ENCODE measurements at regions of chr10 and their contacts with region 1.

Region 1: GRCh38 chr10:110162741-110163145 is 44.7 kb upstream of the MXI1 start:
- DNase-seq: no peak
- H3K4me3 ChIP-seq: no peak overlapping the region
- H3K27ac ChIP-seq: no peak overlapping the region
- H3K4me1 ChIP-seq: no peaks in the 10 kb centered on the region
- H3K27me3 ChIP-seq: no peaks in the 10 kb centered on the region
- CTCF ChIP-seq: no peak

Region 2: DNA sequence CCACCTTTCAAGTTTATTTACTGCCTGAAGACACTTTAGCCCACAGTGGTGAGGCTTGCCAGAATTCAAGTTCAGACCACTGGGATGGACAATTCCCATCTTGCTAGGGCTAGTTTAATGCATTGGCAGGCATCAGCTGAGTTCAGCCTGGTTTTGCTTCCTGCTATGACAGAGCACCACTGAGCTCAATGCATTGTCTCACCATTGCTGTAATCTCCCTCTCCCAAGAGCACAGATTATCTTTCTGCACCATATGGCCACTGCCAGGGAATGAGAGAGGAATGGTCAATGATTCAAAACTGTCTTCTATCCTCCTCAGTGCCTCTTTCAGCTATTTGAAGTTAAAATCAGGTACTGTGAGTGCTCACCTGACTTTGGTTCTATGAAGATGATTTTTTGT is 400.2 kb before region 1 on chr10:
- CTCF ChIA-PET with region 1: no interaction called
- dilution Hi-C with region 1: no loop called
- in situ Hi-C with region 1: no loop called
- intact Hi-C with region 1: no loop called
- DNase-seq: no peak
- H3K4me3 ChIP-seq: no peak overlapping the region
- H3K27ac ChIP-seq: no peak overlapping the region
- H3K4me1 ChIP-seq: no peaks in the 10 kb centered on the region
- H3K27me3 ChIP-seq: no peaks in the 10 kb centered on the region
- CTCF ChIP-seq: no peak

Region 3: GRCh38 chr10:110192552-110192951 is 29.8 kb after region 1 on chr10:
- CTCF ChIA-PET with region 1: no interaction called
- dilution Hi-C with region 1: loop called (anchors 5 kb)
- in situ Hi-C with region 1: no loop called
- intact Hi-C with region 1: no loop called
- DNase-seq: no peak
- H3K4me3 ChIP-seq: no peak overlapping the region
- H3K27ac ChIP-seq: no peak overlapping the region
- H3K4me1 ChIP-seq: peaks cover 8% of the 10 kb centered on the region
- H3K27me3 ChIP-seq: peaks cover 2% of the 10 kb centered on the region
- CTCF ChIP-seq: no peak